Mucosa of descending colon (tissue), 3 donors: ENCODE measurements at regions of chr10 and their contacts with region 1.

Region 1: GRCh38 chr10:71569775-71570588 is 149.6 kb downstream of the C10orf105 start:
- DNase-seq: peak in 2 of 3 donors; percentile 70 to 87
- ATAC-seq: peak; percentile 70
- H3K4me3 ChIP-seq: no peak overlapping the region
- H3K4me1 ChIP-seq: no peaks in the 10 kb centered on the region
- CTCF ChIP-seq: peak; percentile 58

Region 2: GRCh38 chr10:71396084-71396720 is 173.8 kb before region 1 on chr10:
- intact Hi-C with region 1: loop called (anchors 10 kb)
- DNase-seq: peak in 2 of 3 donors; percentile 44 to 61
- ATAC-seq: peak; percentile 60
- H3K4me3 ChIP-seq: no peak overlapping the region
- H3K4me1 ChIP-seq: peaks cover 10% of the 10 kb centered on the region
- CTCF ChIP-seq: no peak

Region 3: GRCh38 chr10:71408436-71409225 is 161.4 kb before region 1 on chr10:
- intact Hi-C with region 1: no loop called
- DNase-seq: no peak
- ATAC-seq: no peak
- H3K4me3 ChIP-seq: no peak overlapping the region
- H3K4me1 ChIP-seq: no peaks in the 10 kb centered on the region
- CTCF ChIP-seq: no peak